IMR-90 (cell line): ENCODE measurements at regions of chr11 and their contacts with region 1.

Region 1: GRCh38 chr11:94519478-94520084 is 7.3 kb downstream of the C11orf97 start:
- DNase-seq: peak; percentile 49
- ATAC-seq: peak; percentile 79
- H3K4me3 ChIP-seq: no peak overlapping the region
- H3K27ac ChIP-seq: no peak overlapping the region
- H3K4me1 ChIP-seq: peaks cover 2% of the 10 kb centered on the region; the same call in 1 of the 2 replicates
- H3K27me3 ChIP-seq: peaks cover 8% of the 10 kb centered on the region
- CTCF ChIP-seq: peak; percentile 75
- POLR2A ChIP-seq: no peak
- RAD21 ChIP-seq: peak; percentile 64

Region 2: GRCh38 chr11:94563176-94563847 is 43.7 kb after region 1 on chr11:
- CTCF ChIA-PET with region 1: interaction called, 3 read pairs
- POLR2A ChIA-PET with region 1: no interaction called
- dilution Hi-C with region 1: no loop called
- in situ Hi-C with region 1: no loop called
- intact Hi-C with region 1: loop called (anchors 1 kb)
- DNase-seq: peak; percentile 77
- ATAC-seq: peak; percentile 98
- H3K4me3 ChIP-seq: no peak overlapping the region
- H3K27ac ChIP-seq: no peak overlapping the region
- H3K4me1 ChIP-seq: peaks cover 6% of the 10 kb centered on the region
- H3K27me3 ChIP-seq: no peaks in the 10 kb centered on the region
- CTCF ChIP-seq: peak; percentile 62
- POLR2A ChIP-seq: no peak
- RAD21 ChIP-seq: peak; percentile 66

Region 3: GRCh38 chr11:94574193-94574961 is 54.8 kb after region 1 on chr11:
- CTCF ChIA-PET with region 1: interaction called, 3 read pairs
- POLR2A ChIA-PET with region 1: no interaction called
- dilution Hi-C with region 1: no loop called
- in situ Hi-C with region 1: loop called (anchors 10 kb)
- intact Hi-C with region 1: no loop called
- DNase-seq: peak; percentile 90
- ATAC-seq: peak; percentile 94
- H3K4me3 ChIP-seq: no peak overlapping the region
- H3K27ac ChIP-seq: peak overlapping the region; percentile 66; the same call in 1 of the 2 replicates
- H3K4me1 ChIP-seq: peaks cover 5% of the 10 kb centered on the region
- H3K27me3 ChIP-seq: peaks cover 4% of the 10 kb centered on the region; the same call in 1 of the 2 replicates
- CTCF ChIP-seq: no peak
- POLR2A ChIP-seq: no peak
- RAD21 ChIP-seq: no peak

Region 4: DNA sequence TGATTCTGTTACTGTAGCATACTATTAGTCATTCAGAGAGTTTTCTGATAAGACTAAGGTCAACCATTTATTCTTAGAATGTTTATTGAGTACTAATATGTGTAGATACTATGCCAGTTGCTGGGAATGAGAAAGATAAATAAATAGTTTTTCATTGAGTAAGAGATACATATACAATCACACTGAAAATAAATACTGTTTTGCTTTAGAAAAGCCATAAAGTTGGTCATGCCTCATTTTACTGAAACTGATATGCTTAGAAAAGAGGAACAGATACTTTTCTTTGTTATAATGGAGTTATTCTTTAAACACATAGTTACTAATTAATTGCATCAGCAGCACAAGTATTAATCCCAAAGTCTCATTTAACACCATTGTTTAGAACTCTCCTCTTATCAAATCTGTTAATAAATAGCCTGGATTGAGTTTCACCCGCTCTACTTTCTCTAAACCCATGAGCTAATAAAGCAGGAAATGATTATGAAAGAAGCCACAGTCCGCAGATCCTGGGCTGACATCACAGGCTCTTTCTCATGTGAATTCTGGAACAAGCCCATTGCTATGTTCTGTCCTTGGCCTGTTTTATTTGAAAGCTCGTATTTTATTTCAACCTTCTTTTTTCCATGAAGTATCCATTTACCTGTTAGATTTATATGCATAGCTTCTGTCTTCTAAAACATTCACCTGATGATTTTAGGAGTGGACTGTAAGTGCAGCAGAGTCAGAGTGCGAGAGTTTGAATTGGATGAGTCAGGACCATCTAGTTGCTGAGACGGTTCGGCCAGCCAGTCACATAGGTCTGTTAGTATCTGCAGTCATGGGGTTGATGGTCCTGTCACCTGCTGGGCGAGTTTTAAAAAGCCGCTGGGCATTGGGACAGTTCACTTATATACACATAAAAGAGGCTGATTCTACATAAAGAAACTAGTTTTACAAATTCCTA is 83.1 kb after region 1 on chr11:
- CTCF ChIA-PET with region 1: interaction called, 6 read pairs
- POLR2A ChIA-PET with region 1: no interaction called
- dilution Hi-C with region 1: no loop called
- in situ Hi-C with region 1: loop called (anchors 5 kb)
- intact Hi-C with region 1: loop called (anchors 1 kb)
- DNase-seq: peak; percentile 86
- ATAC-seq: peak; percentile 92
- H3K4me3 ChIP-seq: no peak overlapping the region
- H3K27ac ChIP-seq: peak overlapping the region; percentile 15; the same call in 1 of the 2 replicates
- H3K4me1 ChIP-seq: no peaks in the 10 kb centered on the region; the same call in 1 of the 2 replicates
- H3K27me3 ChIP-seq: no peaks in the 10 kb centered on the region
- CTCF ChIP-seq: peak; percentile 64
- POLR2A ChIP-seq: no peak
- RAD21 ChIP-seq: peak; percentile 55